Activated CD4-positive, alpha-beta T cell treated with anti-CD3 and anti-CD28 coated beads, Interleukin-2, amount 10 ng/mL, durations not matched to agents 24 days and 14 days (primary cell): ENCODE measurements at regions of chr12 and their contacts with region 1.

Region 1: DNA sequence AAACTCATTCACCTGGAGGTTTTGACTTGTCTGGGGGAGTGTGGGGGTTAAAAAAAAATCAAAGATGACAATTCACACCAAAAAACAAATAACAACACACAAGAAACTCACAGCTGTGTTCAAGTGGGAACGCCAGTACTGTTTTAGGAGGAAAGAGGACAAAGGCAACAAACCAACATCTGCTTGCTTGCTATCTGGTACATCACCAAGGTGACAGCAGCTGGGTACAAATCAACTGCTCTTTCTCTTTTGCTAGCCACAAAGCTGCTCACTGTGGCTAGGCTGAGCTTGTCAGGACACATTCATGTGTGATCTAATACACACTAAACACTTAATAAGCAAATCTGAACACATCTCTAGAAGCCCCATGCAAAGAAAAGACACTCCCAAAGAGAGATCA is 128.0 kb upstream of the RAP1B start:
- DNase-seq: peak; percentile 84
- H3K4me3 Mint-ChIP-seq: peak overlapping the region; percentile 46
- H3K27ac Mint-ChIP-seq: peak overlapping the region; percentile 92
- H3K4me1 Mint-ChIP-seq: peaks cover 34% of the 10 kb centered on the region
- H3K27me3 Mint-ChIP-seq: no peaks in the 10 kb centered on the region

Region 2: DNA sequence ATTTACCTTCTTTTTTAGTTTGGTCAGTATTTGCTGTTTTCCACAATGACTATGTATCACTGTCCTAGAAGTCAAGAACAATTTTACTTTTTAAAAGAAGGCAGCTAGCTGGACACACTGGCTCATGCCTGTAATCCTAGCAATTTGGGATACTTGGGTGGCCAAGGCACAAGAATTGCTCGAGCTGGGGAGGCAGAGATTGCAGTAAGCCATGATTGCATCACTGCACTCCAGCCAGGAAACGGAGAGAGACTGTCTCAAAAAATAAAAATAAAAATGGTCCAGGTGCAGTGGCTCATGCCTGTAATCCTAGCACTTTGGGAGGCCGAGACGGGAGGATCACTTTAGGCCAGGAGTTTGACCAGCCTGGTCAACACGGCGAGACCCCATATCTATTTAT is 178.8 kb before region 1 on chr12:
- intact Hi-C with region 1: no loop called
- DNase-seq: no peak
- H3K4me3 Mint-ChIP-seq: no peak overlapping the region
- H3K27ac Mint-ChIP-seq: no peak overlapping the region
- H3K4me1 Mint-ChIP-seq: peaks cover 26% of the 10 kb centered on the region
- H3K27me3 Mint-ChIP-seq: no peaks in the 10 kb centered on the region

Region 3: DNA sequence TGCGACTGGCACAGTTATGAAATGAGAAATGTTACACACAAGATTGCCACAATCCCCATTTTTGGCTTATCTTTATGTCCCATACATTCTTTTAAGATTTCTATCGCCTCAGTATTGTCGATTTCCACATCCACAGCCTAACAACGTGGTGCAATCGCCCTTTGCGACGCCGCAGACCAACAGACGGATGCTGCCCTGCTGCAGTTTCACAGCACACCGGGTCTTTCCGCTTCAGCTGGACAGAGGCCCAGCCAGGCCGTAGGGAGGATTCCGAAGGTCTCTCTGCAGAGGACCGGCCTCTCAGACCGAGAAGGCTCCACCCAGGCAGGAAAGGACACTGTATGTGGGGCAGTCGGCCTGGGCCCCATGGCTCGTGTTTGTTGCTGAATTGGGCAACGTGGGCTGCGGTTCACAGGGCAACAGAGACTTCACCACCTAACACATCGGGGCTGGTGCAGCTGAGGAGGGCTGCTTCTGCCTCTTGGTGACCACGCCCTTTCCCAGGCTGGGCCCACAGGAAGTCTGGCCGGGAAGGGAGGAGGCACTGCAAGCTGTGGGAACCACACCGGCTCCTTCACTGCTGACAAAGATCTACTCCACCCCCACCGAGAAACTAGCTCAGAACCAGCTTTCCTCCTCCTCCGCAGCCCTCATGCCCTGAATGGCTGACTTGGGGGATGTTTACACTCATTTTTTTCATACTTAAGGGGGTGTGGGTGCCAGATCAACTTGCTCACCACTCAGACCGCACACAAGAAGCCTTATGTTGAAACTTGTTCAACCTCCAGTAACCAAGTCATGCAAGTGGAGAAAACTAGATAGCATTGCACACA is 117.6 kb before region 1 on chr12:
- intact Hi-C with region 1: loop called (anchors 1 kb)
- DNase-seq: peak; percentile 95
- H3K4me3 Mint-ChIP-seq: peak overlapping the region; percentile 83
- H3K27ac Mint-ChIP-seq: peak overlapping the region; percentile 95
- H3K4me1 Mint-ChIP-seq: peaks cover 56% of the 10 kb centered on the region
- H3K27me3 Mint-ChIP-seq: no peaks in the 10 kb centered on the region

Region 4: DNA sequence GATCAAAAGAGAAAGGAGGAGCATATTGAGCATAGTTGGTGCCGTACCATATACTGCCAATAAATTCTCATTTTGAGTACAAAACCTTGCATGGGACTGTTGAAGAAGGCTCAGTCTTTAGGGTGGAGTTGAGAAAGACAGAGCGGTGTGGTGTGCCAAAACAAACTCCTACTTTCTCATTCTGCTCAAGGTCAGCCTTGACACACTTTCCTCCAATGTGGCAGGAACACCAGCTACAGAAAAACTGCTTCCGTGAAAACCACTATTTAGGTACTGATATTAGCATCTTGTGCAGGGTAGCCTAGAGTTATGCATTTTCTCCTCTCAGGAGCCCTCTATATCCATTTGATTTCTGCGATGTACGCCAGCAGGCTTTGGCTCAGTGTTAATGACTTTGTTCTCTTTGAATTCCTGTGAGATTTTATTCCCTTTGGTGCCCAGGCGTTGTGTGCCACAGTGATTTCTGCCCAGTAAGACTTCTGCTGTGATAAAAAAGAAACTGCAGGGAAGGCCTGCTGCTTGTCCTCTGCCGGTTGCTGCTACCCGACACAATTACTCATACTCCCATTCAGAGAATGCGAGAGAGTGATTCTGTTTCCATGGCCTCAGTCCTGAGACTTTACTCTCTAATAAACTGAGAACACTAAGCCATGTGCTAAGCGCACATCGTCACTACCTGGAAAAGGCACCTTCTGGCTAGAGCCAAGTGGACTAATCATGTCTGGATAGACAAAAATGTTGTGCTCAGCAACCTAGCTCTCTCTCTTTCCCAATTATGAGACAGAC is 62.2 kb before region 1 on chr12:
- intact Hi-C with region 1: no loop called
- DNase-seq: no peak
- H3K4me3 Mint-ChIP-seq: no peak overlapping the region
- H3K27ac Mint-ChIP-seq: no peak overlapping the region
- H3K4me1 Mint-ChIP-seq: peaks cover 13% of the 10 kb centered on the region
- H3K27me3 Mint-ChIP-seq: no peaks in the 10 kb centered on the region

Region 5: GRCh38 chr12:68497702-68498101 is 15.0 kb after region 1 on chr12:
- intact Hi-C with region 1: loop called (anchors 1 kb)
- DNase-seq: peak; percentile 69
- H3K4me3 Mint-ChIP-seq: peak overlapping the region; percentile 66
- H3K27ac Mint-ChIP-seq: peak overlapping the region; percentile 89
- H3K4me1 Mint-ChIP-seq: peaks cover 34% of the 10 kb centered on the region
- H3K27me3 Mint-ChIP-seq: no peaks in the 10 kb centered on the region

Region 6: GRCh38 chr12:68587448-68587873 is 104.8 kb after region 1 on chr12:
- intact Hi-C with region 1: loop called (anchors 5 kb)
- DNase-seq: peak; percentile 84
- H3K4me3 Mint-ChIP-seq: peak overlapping the region; percentile 16
- H3K27ac Mint-ChIP-seq: peak overlapping the region; percentile 74
- H3K4me1 Mint-ChIP-seq: peaks cover 36% of the 10 kb centered on the region
- H3K27me3 Mint-ChIP-seq: no peaks in the 10 kb centered on the region